ENCODE measurements at regions of chr19 and their contacts with region 1.

Region 1: GRCh38 chr19:44770550-44771257 is 7.0 kb upstream of the CBLC start:
- DNase-seq: peak; percentile 88 to 96 (median 94)
- ATAC-seq: peak; percentile 100
- H3K4me3 ChIP-seq: no peak overlapping the region
- H3K4me3 Mint-ChIP-seq: peak overlapping the region; percentile 45 to 83 (median 72)
- H3K27ac ChIP-seq: no peak overlapping the region
- H3K27ac Mint-ChIP-seq: peak overlapping the region; percentile 69 to 95 (median 86)
- H3K4me1 ChIP-seq: peaks cover 5 to 9% of the 10 kb centered on the region in 2 donors
- H3K4me1 Mint-ChIP-seq: peaks cover 0 to 37% (median 24%) of the 10 kb centered on the region in 7 donors
- H3K27me3 ChIP-seq: no peaks in the 10 kb centered on the region
- H3K27me3 Mint-ChIP-seq: peaks cover 0 to 3% (median 0%) of the 10 kb centered on the region in 5 donors

Region 2: DNA sequence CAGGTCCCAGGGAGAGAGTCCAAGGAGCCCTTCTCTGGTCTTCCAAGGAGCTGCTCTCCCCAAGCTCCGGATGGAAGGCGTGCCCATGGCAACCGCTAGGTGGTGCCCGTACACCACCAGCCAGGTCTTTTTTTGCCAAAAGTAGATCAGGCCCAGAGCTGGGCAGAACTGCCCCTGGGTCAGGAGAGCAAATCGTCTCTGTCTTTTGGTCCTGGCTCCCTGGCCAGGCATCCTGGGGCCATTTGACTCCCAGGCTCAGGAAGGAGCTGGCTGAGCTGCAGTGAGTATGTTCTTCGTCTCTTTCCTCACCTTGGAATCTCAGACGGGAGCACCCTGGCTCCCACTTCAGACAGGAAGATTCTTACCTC is 46.8 kb before region 1 on chr19:
- CTCF ChIA-PET with region 1: interaction called, 295 read pairs
- POLR2A ChIA-PET with region 1: interaction called, 23 read pairs
- intact Hi-C with region 1: loop called (anchors 1 kb)
- DNase-seq: peak; percentile 64 to 84 (median 76)
- ATAC-seq: peak; percentile 93
- H3K4me3 ChIP-seq: no peak overlapping the region
- H3K4me3 Mint-ChIP-seq: peak overlapping the region in 1 of 10 donors; percentile 60
- H3K27ac ChIP-seq: no peak overlapping the region
- H3K27ac Mint-ChIP-seq: peak overlapping the region in 5 of 9 donors; percentile 26 to 79 (median 61)
- H3K4me1 ChIP-seq: peaks cover 0 to 10% of the 10 kb centered on the region in 2 donors
- H3K4me1 Mint-ChIP-seq: peaks cover 8 to 62% (median 24%) of the 10 kb centered on the region in 7 donors
- H3K27me3 ChIP-seq: no peaks in the 10 kb centered on the region
- H3K27me3 Mint-ChIP-seq: peaks cover 0 to 4% (median 0%) of the 10 kb centered on the region in 5 donors

Region 3: GRCh38 chr19:44746946-44747738 is 23.6 kb before region 1 on chr19:
- CTCF ChIA-PET with region 1: interaction called, 9 read pairs
- POLR2A ChIA-PET with region 1: interaction called, 12 read pairs
- intact Hi-C with region 1: loop called (anchors 1 kb)
- DNase-seq: peak; percentile 51 to 97 (median 61)
- ATAC-seq: peak; percentile 83
- H3K4me3 ChIP-seq: peak overlapping the region; percentile 91
- H3K4me3 Mint-ChIP-seq: peak overlapping the region; percentile 90 to 99 (median 92)
- H3K27ac ChIP-seq: peak overlapping the region; percentile 97
- H3K27ac Mint-ChIP-seq: peak overlapping the region; percentile 87 to 99 (median 94)
- H3K4me1 ChIP-seq: peaks cover 23 to 33% of the 10 kb centered on the region in 2 donors
- H3K4me1 Mint-ChIP-seq: peaks cover 35 to 56% (median 55%) of the 10 kb centered on the region in 7 donors
- H3K27me3 ChIP-seq: no peaks in the 10 kb centered on the region
- H3K27me3 Mint-ChIP-seq: peaks cover 0 to 3% (median 0%) of the 10 kb centered on the region in 5 donors

Region 4: GRCh38 chr19:44890366-44891015 is 119.8 kb after region 1 on chr19:
- CTCF ChIA-PET with region 1: no interaction called
- POLR2A ChIA-PET with region 1: no interaction called
- intact Hi-C with region 1: loop called in 1 of 2 experiments (anchors 1 kb)
- DNase-seq: peak; percentile 97 to 100 (median 100)
- ATAC-seq: peak; percentile 86
- H3K4me3 ChIP-seq: peak overlapping the region; percentile 69
- H3K4me3 Mint-ChIP-seq: peak overlapping the region; percentile 83 to 93 (median 89)
- H3K27ac ChIP-seq: peak overlapping the region; percentile 84
- H3K27ac Mint-ChIP-seq: peak overlapping the region; percentile 90 to 96 (median 94)
- H3K4me1 ChIP-seq: peaks cover 10 to 20% of the 10 kb centered on the region in 2 donors
- H3K4me1 Mint-ChIP-seq: peaks cover 18 to 44% (median 35%) of the 10 kb centered on the region in 7 donors
- H3K27me3 ChIP-seq: no peaks in the 10 kb centered on the region
- H3K27me3 Mint-ChIP-seq: no peaks in the 10 kb centered on the region

Measured in naive thymus-derived CD4-positive, alpha-beta T cell (primary cell).